T-cell (primary cell): ENCODE measurements at regions of chr11 and their contacts with region 1.

Region 1: DNA sequence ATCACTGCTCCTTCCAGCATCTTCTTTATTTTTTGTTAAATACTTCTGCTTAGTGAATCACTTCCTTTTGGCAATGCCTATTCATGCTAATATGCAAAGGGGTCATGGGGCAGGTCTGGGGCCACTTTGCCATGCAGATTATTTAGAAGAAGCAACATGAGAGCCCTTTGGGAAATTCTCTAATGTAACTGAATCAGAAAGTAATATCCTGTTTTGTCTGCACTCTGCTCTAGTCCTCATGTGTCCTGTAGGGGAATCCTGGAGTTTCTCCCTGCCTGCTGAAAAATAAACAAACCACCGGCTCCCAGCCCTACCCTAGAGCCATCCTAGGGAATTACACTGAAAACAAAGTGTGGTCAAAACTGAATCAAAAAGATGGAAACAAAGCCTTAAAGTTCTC is 176.5 kb upstream of the POU2AF2 start:
- DNase-seq: no peak
- ATAC-seq: no peak
- H3K4me3 ChIP-seq: no peak overlapping the region
- H3K4me3 Mint-ChIP-seq: no peak overlapping the region
- H3K27ac ChIP-seq: no peak overlapping the region
- H3K27ac Mint-ChIP-seq: no peak overlapping the region
- H3K4me1 ChIP-seq: no peaks in the 10 kb centered on the region
- H3K4me1 Mint-ChIP-seq: no peaks in the 10 kb centered on the region
- H3K27me3 ChIP-seq: no peaks in the 10 kb centered on the region
- H3K27me3 Mint-ChIP-seq: no peaks in the 10 kb centered on the region

Region 2: DNA sequence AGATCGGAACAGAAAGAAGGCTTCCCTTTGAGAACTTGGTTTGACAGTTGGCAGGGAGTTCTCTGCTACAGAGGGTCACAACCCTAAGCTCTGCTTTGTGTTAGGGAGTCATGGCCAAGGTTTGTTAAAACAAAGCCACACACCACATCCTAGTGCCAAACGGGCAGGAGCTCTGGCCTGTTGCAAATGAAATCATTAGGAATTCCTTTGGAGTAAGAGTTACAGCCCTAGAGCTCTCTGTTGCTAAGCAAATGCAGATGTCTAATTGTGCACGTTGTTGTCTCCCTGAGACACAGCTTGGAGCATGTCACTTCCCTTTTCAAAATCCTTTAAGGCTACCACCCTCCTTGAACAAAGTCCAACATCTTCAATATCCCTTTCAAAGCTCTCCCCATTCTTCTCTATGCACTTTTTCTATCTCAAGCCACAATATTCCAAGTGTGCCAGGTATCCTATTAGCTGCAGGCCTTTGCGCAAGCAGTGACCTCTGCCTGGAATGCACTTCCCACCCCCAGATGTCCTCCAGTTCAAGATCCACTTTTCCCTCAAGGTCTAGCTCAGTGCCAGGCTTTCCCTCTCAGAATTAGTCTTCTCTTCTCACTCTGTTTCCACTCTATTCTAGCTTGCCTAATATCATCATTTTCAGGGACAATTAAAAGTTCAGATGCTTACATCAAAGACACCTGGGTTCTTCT is 77.3 kb before region 1 on chr11:
- CTCF ChIA-PET with region 1: no interaction called
- POLR2A ChIA-PET with region 1: no interaction called
- DNase-seq: no peak
- ATAC-seq: no peak
- H3K4me3 ChIP-seq: no peak overlapping the region
- H3K4me3 Mint-ChIP-seq: no peak overlapping the region
- H3K27ac ChIP-seq: no peak overlapping the region
- H3K27ac Mint-ChIP-seq: no peak overlapping the region
- H3K4me1 ChIP-seq: no peaks in the 10 kb centered on the region
- H3K4me1 Mint-ChIP-seq: no peaks in the 10 kb centered on the region
- H3K27me3 ChIP-seq: no peaks in the 10 kb centered on the region
- H3K27me3 Mint-ChIP-seq: peaks cover 0 to 2% of the 10 kb centered on the region in 2 donors

Region 3: GRCh38 chr11:111296196-111296595 is 227.1 kb after region 1 on chr11:
- CTCF ChIA-PET with region 1: no interaction called
- POLR2A ChIA-PET with region 1: interaction called in 1 of 2 experiments, 20 read pairs
- DNase-seq: no peak
- ATAC-seq: no peak
- H3K4me3 ChIP-seq: no peak overlapping the region
- H3K4me3 Mint-ChIP-seq: no peak overlapping the region
- H3K27ac ChIP-seq: no peak overlapping the region
- H3K27ac Mint-ChIP-seq: no peak overlapping the region
- H3K4me1 ChIP-seq: peaks cover 0 to 5% of the 10 kb centered on the region in 2 experiments
- H3K4me1 Mint-ChIP-seq: peaks cover 0 to 6% (median 4%) of the 10 kb centered on the region in 3 donors
- H3K27me3 ChIP-seq: peaks cover 2 to 35% of the 10 kb centered on the region in 2 experiments
- H3K27me3 Mint-ChIP-seq: peaks cover 12 to 27% of the 10 kb centered on the region in 2 donors

Region 4: GRCh38 chr11:111422494-111423249 is 353.6 kb after region 1 on chr11:
- CTCF ChIA-PET with region 1: no interaction called
- POLR2A ChIA-PET with region 1: no interaction called
- DNase-seq: peak in 28 of 35 experiments; percentile 6 to 52 (median 30)
- ATAC-seq: peak in 3 of 4 experiments; percentile 59 to 64 (median 59)
- H3K4me3 ChIP-seq: no peak overlapping the region
- H3K4me3 Mint-ChIP-seq: no peak overlapping the region
- H3K27ac ChIP-seq: no peak overlapping the region
- H3K27ac Mint-ChIP-seq: no peak overlapping the region
- H3K4me1 ChIP-seq: peaks cover 3 to 9% of the 10 kb centered on the region in 2 experiments
- H3K4me1 Mint-ChIP-seq: peaks cover 8 to 14% (median 12%) of the 10 kb centered on the region in 3 donors
- H3K27me3 ChIP-seq: no peaks in the 10 kb centered on the region
- H3K27me3 Mint-ChIP-seq: no peaks in the 10 kb centered on the region